ENCODE measurements at regions of chr6 and their contacts with region 1.

Region 1: DNA sequence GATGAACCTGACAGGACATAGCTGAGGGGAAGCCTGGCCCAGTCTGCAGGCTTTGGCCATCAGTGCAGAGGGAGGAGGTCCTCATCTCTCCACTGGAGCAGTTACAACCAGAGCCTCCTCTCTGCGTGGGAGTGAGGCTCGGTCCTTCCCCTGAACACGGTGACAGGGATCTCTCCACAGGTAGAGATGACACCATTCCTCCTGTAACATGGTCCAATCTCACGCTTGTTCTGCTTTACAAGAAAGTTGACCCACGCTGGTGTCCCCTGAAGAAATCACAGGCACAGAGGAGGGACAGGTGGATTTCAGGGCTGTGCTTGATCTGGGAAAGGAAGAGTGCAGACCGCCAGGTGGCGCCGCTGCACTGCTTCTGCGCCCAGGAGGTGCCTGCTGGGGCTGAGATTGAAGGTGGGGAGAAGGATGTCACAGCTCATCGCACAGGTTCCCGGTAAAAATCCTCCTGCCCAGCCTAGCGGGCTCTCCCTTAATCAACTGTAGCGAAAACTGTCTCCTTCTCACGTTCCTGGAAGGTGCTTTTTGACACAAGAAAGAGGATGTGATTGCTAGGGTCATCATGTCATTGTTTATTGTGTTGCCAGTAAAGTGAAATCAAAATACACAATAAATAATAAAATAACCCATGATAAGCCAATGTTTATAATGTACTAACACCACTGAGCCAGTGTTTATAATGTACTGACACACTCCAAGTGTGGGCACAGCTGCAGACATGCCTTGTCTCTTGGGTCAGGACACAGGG is 20.4 kb downstream of the HLA-G start:
- DNase-seq: peak; percentile 76
- H3K4me3 ChIP-seq: no peak overlapping the region; a peak in 1 of 4 replicates
- H3K27ac ChIP-seq: no peak overlapping the region
- H3K4me1 ChIP-seq: no peaks in the 10 kb centered on the region; a peak in 1 of 4 replicates
- H3K27me3 ChIP-seq: peaks cover 26% of the 10 kb centered on the region; the same call in 1 of the 2 replicates
- CTCF ChIP-seq: peak; percentile 95
- EP300 ChIP-seq: no peak
- RAD21 ChIP-seq: peak; percentile 99

Region 2: GRCh38 chr6:29864037-29864795 is 16.2 kb after region 1 on chr6:
- CTCF ChIA-PET with region 1: interaction called, 21 read pairs
- POLR2A ChIA-PET with region 1: no interaction called
- DNase-seq: no peak
- H3K4me3 ChIP-seq: no peak overlapping the region
- H3K27ac ChIP-seq: no peak overlapping the region
- H3K4me1 ChIP-seq: no peaks in the 10 kb centered on the region; a peak in 1 of 4 replicates
- H3K27me3 ChIP-seq: peaks cover 17% of the 10 kb centered on the region; the same call in 1 of the 2 replicates
- CTCF ChIP-seq: no peak
- EP300 ChIP-seq: no peak
- RAD21 ChIP-seq: no peak

Region 3: DNA sequence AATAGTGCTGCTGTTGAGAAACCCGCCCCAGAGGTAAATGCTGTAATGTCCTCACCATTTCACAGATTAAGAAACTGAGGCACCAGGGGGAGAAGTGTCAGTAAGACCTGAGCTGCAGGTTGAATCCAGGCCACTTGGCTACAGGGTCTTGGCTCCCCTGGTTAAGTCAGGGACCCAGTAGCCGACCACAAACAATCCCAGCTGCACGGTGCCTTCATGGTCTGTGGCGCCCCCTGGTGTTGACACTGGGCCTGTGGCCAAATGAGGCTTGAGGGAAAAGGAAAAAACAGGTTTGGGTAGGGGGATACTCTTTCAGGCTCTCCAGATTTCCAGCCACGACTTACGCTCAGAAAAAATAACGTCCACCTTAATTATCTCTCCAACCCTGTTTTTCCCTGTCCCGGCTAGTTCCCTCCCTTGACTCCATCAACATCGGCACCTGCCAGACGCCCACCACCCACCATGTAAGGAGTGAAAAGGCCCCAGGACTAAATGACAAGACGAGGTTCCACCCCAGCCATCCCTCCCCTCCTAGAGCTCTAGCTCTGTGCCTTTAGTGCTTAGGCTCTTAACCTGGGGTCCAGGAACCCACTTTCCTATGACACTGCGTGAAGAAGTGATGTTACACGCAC is 165.4 kb after region 1 on chr6:
- CTCF ChIA-PET with region 1: interaction called, 67 read pairs
- POLR2A ChIA-PET with region 1: interaction called, 3 read pairs
- DNase-seq: peak; percentile 64
- H3K4me3 ChIP-seq: no peak overlapping the region
- H3K27ac ChIP-seq: no peak overlapping the region
- H3K4me1 ChIP-seq: no peaks in the 10 kb centered on the region
- H3K27me3 ChIP-seq: no peaks in the 10 kb centered on the region
- CTCF ChIP-seq: peak; percentile 66
- EP300 ChIP-seq: no peak
- RAD21 ChIP-seq: peak; percentile 83

Region 4: DNA sequence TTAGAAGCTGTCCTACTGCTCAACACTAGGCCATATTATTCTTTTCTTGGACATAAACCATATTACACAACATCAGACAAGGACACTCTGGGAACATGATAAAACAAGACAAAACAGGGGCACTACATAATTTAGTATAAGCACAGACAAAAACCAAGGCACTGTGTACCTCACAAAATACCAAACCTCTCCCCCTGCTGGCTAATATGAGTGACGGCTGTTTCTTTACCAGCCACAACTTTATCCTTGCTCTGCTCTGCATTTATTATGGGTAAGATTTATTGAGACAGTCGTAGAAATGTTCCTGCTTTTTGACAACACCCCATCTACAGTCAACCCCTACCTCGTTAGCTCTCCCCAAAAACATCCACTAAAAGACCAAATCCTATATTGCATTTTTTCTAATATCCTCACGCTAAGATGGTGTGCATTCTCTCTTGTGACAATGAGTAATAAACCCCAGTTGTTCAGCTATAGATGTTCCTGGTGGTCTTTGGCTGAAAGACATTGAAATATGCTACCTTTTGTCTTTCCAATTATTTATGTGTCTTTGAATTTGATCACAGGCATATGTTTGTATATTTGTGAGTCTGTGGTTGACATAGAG is 189.2 kb after region 1 on chr6:
- CTCF ChIA-PET with region 1: interaction called, 29 read pairs
- POLR2A ChIA-PET with region 1: no interaction called
- DNase-seq: peak; percentile 30
- H3K4me3 ChIP-seq: no peak overlapping the region; a peak in 1 of 4 replicates
- H3K27ac ChIP-seq: no peak overlapping the region
- H3K4me1 ChIP-seq: no peaks in the 10 kb centered on the region
- H3K27me3 ChIP-seq: no peaks in the 10 kb centered on the region
- CTCF ChIP-seq: peak; percentile 58
- EP300 ChIP-seq: no peak
- RAD21 ChIP-seq: peak; percentile 38

Measured in SK-N-SH (cell line).